ENCODE measurements at regions of chr5 and their contacts with region 1.

Region 1: DNA sequence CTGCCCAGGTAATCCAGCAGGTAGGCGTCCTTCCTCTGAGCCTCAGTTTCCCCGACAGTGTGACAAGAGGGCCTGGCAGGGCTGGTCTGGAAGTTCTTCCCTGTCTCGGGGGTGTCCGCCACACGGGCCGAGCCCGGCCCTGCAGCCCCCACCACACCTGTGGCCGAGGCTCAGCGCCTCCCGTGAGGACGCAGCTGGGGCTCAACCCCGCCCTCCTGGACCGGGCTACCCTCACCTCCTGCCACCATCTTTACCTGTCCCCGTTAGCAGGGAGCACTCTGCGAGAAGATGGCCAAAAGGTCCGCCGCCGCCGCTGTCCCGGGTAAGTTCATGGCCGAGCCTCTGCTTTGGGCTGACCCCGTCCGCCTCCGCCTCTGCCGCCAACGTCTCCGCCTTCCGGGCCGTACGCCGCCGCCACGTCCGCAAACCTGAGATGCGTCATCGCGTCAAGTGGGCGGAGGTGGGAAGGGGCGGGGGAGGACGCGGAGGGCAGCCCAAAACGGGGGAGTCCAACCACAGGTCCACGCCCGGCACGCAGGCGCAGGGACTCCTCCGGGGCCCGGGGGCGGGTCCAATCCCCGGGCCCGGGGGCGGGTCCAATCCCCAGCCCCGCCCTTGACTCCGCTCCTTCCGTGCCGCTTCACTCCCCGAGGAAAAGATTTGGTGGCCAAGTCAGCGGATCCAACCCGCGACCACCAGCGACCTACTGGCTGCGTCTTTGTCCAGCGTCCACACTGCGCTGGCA is at the start of gene LYSMD3:
- DNase-seq: peak; percentile 95 to 98 (median 96)
- ATAC-seq: peak; percentile 82 to 87
- H3K4me3 Mint-ChIP-seq: peak within 1 kb of the TSS; percentile 95 to 100 (median 100)
- H3K27ac Mint-ChIP-seq: peak within 1 kb of the TSS; percentile 96 to 100 (median 99)
- H3K4me1 Mint-ChIP-seq: peaks cover 15 to 42% (median 32%) of the 10 kb centered on the region in 4 donors
- H3K27me3 Mint-ChIP-seq: peaks cover 7 to 21% (median 14%) of the 10 kb centered on the region in 5 donors
- polyA plus RNA-seq, gene LYSMD3: 6.6 to 8.4 (median 7.1) TPM

Region 2: GRCh38 chr5:90409318-90410177 is 119.8 kb before region 1 on chr5 and contains the start of gene CETN3:
- POLR2A ChIA-PET with region 1: interaction called, 40 read pairs
- DNase-seq: peak; percentile 77 to 96 (median 90)
- ATAC-seq: peak; percentile 92 to 93
- H3K4me3 Mint-ChIP-seq: no peak within 1 kb of the TSS
- H3K27ac Mint-ChIP-seq: no peak within 1 kb of the TSS
- H3K4me1 Mint-ChIP-seq: peaks cover 8 to 26% (median 17%) of the 10 kb centered on the region in 4 donors
- H3K27me3 Mint-ChIP-seq: no peaks in the 10 kb centered on the region
- polyA plus RNA-seq, gene CETN3: 19.0 to 33.0 (median 26.7) TPM

Region 3: DNA sequence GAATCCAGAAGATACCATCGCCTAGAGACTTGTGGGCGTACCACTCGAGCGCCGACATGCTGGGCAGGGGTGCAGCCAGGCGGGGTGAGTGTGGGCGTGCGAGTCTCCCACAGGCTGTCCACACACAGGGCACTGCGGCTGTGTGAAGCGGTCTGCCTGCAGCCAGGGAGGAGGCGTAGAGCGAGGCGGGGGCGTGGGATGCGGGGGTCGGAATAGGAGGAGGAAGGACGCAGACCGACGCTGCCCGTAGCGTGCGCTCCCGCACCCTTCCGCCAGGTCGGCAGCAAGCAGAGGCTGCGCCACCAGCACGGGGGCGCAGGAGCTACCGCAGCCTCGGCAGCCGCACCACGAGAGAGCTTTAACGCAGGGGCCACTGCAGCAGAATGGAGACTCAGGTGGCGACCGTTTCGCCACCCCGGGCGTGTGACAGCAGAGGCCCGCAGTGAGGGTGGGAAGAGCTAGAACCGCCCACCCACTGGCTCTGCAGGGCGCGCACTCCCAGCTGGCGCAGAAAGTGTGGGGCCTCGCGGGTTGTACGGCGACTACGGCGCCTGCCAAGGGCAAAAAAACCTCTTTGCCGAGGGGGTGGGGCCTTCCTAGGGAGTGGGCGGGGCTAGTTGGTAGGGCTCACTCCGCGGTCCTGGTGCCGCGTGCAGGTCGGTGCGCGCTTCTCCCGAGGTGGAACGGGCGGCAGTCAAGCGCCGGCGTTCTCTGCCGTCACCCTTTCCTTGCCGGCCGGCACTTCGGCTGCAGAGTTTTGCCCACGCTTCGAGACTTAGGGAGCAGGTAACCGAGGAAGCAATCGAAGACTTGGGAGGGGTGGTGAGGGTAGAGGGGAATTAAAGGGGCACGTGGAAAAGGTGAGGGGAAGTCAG is 54.9 kb before region 1 on chr5 and contains the starts of genes MBLAC2 and POLR3G:
- POLR2A ChIA-PET with region 1: interaction called, 50 read pairs
- DNase-seq: peak; percentile 84 to 96 (median 92)
- ATAC-seq: peak; percentile 84 to 86
- H3K4me3 Mint-ChIP-seq: peak within 1 kb of the TSS; percentile 92 to 99 (median 98)
- H3K27ac Mint-ChIP-seq: peak within 1 kb of the TSS; percentile 94 to 98 (median 96)
- H3K4me1 Mint-ChIP-seq: peaks cover 23 to 39% (median 35%) of the 10 kb centered on the region in 4 donors
- H3K27me3 Mint-ChIP-seq: no peaks in the 10 kb centered on the region
- polyA plus RNA-seq, gene MBLAC2: 4.7 to 5.7 (median 5.3) TPM
- polyA plus RNA-seq, gene POLR3G: 1.9 to 2.8 (median 2.1) TPM

Region 4: DNA sequence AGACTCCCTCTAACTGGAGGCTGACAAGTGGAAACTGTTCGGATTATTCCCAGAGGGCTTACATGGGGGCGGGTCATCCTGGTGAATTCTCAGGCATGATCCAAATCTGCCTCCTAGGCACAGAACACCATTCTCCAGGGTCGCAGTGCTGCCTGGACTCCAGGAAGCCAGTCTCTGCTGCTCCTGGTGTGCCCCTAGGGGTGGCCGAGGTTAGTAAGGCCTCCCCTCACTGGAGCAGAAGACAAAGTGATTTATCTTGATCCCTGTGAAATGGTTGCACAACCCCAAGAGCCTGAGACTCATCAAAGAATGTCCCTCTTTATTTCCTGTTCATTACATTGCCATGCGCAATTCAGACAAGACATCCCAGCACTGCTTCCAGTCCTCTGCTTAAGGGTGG is 46.3 kb after region 1 on chr5:
- POLR2A ChIA-PET with region 1: no interaction called
- DNase-seq: no peak
- ATAC-seq: no peak
- H3K4me3 Mint-ChIP-seq: no peak overlapping the region
- H3K27ac Mint-ChIP-seq: no peak overlapping the region
- H3K4me1 Mint-ChIP-seq: no peaks in the 10 kb centered on the region
- H3K27me3 Mint-ChIP-seq: peaks cover 27 to 65% (median 38%) of the 10 kb centered on the region in 5 donors

Measured in naive thymus-derived CD8-positive, alpha-beta T cell (primary cell).